PC-3 (cell line): ENCODE measurements at regions of chr11 and their contacts with region 1.

Region 1: GRCh38 chr11:16613512-16614381 is 124.7 kb upstream of the C11orf58 start:
- DNase-seq: peak; percentile 84
- ATAC-seq: peak; percentile 99
- H3K4me3 ChIP-seq: peak overlapping the region; percentile 68
- H3K27ac ChIP-seq: no peak overlapping the region
- H3K4me1 ChIP-seq: peaks cover 13% of the 10 kb centered on the region
- H3K27me3 ChIP-seq: peaks cover 82% of the 10 kb centered on the region
- CTCF ChIP-seq: peak; percentile 83

Region 2: GRCh38 chr11:15650105-15650938 is 963.4 kb before region 1 on chr11:
- CTCF ChIA-PET with region 1: interaction called, 3 read pairs
- POLR2A ChIA-PET with region 1: no interaction called
- intact Hi-C with region 1: loop called (anchors 2 kb)
- DNase-seq: peak; percentile 86
- ATAC-seq: peak; percentile 97
- H3K4me3 ChIP-seq: peak overlapping the region; percentile 51
- H3K27ac ChIP-seq: no peak overlapping the region
- H3K4me1 ChIP-seq: 0 out of 2 replicates have a peak, but pooled peaks cover 6% of the 10 kb centered on the region
- H3K27me3 ChIP-seq: no peaks in the 10 kb centered on the region
- CTCF ChIP-seq: peak; percentile 76